MCF 10A (cell line): ENCODE measurements at regions of chr9 and their contacts with region 1.

Region 1: GRCh38 chr9:4984621-4985385 is at the start of gene JAK2:
- DNase-seq: peak; percentile 95
- H3K4me3 Mint-ChIP-seq: peak within 1 kb of the TSS; percentile 90
- H3K27ac Mint-ChIP-seq: peak within 1 kb of the TSS; percentile 76
- H3K4me1 Mint-ChIP-seq: peaks cover 36% of the 10 kb centered on the region
- H3K27me3 Mint-ChIP-seq: no peaks in the 10 kb centered on the region
- CTCF ChIP-seq: peak; percentile 43
- total RNA-seq, gene JAK2: 4.3 and 6.6 TPM in 2 replicates

Region 2: DNA sequence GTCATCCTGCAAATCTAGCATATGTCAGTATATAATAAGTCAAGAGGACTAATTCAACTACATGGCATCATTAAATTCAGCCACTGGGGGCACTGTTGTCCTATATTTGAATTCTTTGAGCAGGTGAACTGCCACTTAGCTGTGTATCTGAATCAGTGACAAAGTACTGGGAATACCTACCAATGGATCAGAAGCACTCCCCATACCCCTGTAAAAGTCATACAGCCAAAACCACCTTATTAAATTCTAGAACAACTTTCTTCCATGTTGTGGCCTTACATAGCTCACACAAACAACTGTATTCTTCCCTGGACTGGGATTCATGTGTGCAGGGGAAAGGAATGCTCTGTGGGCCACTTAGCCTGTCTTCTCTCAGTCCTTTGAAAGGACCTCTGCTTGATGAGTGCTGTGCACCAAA is 380.1 kb before region 1 on chr9:
- CTCF ChIA-PET with region 1: interaction called, 4 read pairs
- POLR2A ChIA-PET with region 1: no interaction called
- intact Hi-C with region 1: loop called (anchors 5 kb)
- DNase-seq: peak; percentile 82
- H3K4me3 Mint-ChIP-seq: no peak overlapping the region
- H3K27ac Mint-ChIP-seq: no peak overlapping the region
- H3K4me1 Mint-ChIP-seq: no peaks in the 10 kb centered on the region
- H3K27me3 Mint-ChIP-seq: no peaks in the 10 kb centered on the region
- CTCF ChIP-seq: peak; percentile 61

Region 3: DNA sequence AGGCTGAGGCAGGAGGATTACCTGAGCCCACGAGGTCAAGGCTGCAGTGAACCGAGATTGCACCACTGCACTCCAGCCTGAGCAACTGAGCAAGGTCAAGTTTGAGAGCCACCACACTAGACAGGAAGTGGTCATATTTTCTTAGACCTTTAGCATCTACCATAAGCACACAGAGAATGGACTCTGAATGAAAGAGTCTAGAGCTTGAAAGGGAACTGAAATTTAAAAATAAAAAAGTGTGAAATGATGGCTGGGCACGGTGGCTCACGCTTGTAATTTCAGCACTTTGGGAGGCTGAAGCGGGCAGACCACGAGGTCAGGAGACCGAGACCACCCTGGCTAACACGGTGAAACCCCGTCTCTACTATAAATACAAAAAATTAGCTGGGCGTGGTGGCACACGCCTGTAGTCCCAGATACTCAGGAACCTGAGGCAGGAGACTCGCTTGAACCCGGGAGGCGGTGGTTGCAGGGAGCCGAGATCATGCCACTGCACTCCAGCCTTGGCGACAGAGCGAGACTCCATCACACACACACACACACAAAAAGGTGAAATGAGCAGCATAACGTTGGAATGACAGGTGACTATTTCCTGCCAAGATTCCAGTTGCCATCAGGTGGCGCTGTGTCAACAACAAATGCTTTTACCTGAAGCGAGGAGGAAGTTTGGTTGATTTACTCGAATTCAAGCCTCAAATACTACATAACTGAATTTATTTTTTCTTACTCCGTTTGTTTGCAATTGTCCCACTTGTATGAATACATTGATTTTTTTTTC is 222.5 kb before region 1 on chr9:
- CTCF ChIA-PET with region 1: interaction called, 171 read pairs
- POLR2A ChIA-PET with region 1: interaction called, 5 read pairs
- intact Hi-C with region 1: loop called (anchors 1 kb)
- DNase-seq: peak; percentile 85
- H3K4me3 Mint-ChIP-seq: no peak overlapping the region
- H3K27ac Mint-ChIP-seq: no peak overlapping the region
- H3K4me1 Mint-ChIP-seq: no peaks in the 10 kb centered on the region
- H3K27me3 Mint-ChIP-seq: peaks cover 12% of the 10 kb centered on the region
- CTCF ChIP-seq: peak; percentile 76

Region 4: GRCh38 chr9:4832786-4833579 is 151.8 kb before region 1 on chr9:
- CTCF ChIA-PET with region 1: interaction called, 21 read pairs
- POLR2A ChIA-PET with region 1: interaction called, 4 read pairs
- intact Hi-C with region 1: loop called (anchors 5 kb)
- DNase-seq: peak; percentile 91
- H3K4me3 Mint-ChIP-seq: peak overlapping the region; percentile 47
- H3K27ac Mint-ChIP-seq: peak overlapping the region; percentile 93
- H3K4me1 Mint-ChIP-seq: peaks cover 39% of the 10 kb centered on the region
- H3K27me3 Mint-ChIP-seq: no peaks in the 10 kb centered on the region
- CTCF ChIP-seq: no peak

Region 5: GRCh38 chr9:4923580-4924544 is 60.9 kb before region 1 on chr9:
- CTCF ChIA-PET with region 1: interaction called, 7 read pairs
- POLR2A ChIA-PET with region 1: no interaction called
- intact Hi-C with region 1: loop called (anchors 10 kb)
- DNase-seq: peak; percentile 52
- H3K4me3 Mint-ChIP-seq: no peak overlapping the region
- H3K27ac Mint-ChIP-seq: no peak overlapping the region
- H3K4me1 Mint-ChIP-seq: no peaks in the 10 kb centered on the region
- H3K27me3 Mint-ChIP-seq: peaks cover 11% of the 10 kb centered on the region
- CTCF ChIP-seq: peak; percentile 32

Region 6: DNA sequence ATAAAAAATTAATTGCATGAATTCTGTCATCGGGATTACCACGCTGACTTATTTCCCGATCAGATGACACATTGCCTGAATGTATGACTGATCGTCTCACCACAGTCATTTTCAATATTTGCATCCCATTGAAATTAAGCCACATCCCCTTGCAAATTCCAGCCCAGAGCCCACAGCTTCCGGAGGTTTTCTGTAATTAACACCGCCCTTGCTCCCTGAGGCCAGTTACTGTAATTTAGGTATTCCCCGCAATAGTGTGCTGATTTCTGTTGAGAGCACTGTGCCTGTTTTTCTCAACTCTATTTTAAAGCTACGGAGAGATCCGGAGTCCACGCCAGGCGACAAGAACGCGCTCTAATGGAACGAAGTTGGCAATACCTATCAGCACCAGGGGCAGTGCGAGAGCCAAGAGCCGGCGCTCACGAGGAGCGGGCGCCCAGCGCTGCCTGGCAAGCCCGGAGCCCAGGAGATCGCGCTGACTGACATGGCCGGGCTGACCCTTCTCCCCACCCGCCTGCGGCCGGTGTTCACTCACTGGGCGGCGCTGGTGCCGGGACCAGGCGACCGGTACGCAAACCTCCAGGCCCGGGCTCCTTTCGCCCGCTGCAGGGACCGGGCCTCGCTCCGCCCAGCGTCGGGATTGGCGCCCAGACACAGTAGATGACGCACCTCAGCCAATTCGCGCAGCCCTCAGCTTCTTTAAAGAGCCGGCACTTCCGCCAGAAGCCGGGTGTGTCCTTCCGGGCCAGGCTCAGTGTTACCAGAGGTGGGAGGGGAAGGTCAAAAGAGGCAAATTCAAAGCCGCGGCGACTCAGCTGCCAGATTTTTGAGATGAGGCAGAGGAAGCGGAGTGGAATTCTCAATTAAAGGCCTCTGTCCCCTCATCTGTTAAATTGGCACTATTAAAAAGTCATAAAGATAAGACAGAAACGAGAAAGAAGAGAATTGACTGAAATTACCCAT is 452.7 kb after region 1 on chr9 and contains the start of gene PLGRKT:
- CTCF ChIA-PET with region 1: interaction called, 6 read pairs
- POLR2A ChIA-PET with region 1: no interaction called
- intact Hi-C with region 1: loop called (anchors 5 kb)
- DNase-seq: peak; percentile 95
- H3K4me3 Mint-ChIP-seq: peak within 1 kb of the TSS; percentile 85
- H3K27ac Mint-ChIP-seq: peak within 1 kb of the TSS; percentile 85
- H3K4me1 Mint-ChIP-seq: no peaks in the 10 kb centered on the region
- H3K27me3 Mint-ChIP-seq: no peaks in the 10 kb centered on the region
- CTCF ChIP-seq: no peak
- total RNA-seq, gene PLGRKT: 21.6 and 22.5 TPM in 2 replicates